CD8-positive, alpha-beta memory T cell (primary cell): ENCODE measurements at regions of chr2 and their contacts with region 1.

Region 1: GRCh38 chr2:174341286-174341994 is 6.7 kb downstream of the SP9 start:
- DNase-seq: peak; percentile 79 to 89 (median 81)
- H3K4me3 ChIP-seq: no peak overlapping the region
- H3K4me3 Mint-ChIP-seq: peak overlapping the region; percentile 72 to 85 (median 75)
- H3K27ac ChIP-seq: no peak overlapping the region
- H3K27ac Mint-ChIP-seq: peak overlapping the region in 5 of 8 donors; percentile 34 to 90 (median 52)
- H3K4me1 ChIP-seq: peaks cover 40% of the 10 kb centered on the region
- H3K4me1 Mint-ChIP-seq: peaks cover 35 to 50% (median 46%) of the 10 kb centered on the region in 3 donors
- H3K27me3 ChIP-seq: peaks cover 74% of the 10 kb centered on the region
- H3K27me3 Mint-ChIP-seq: peaks cover 68 to 69% of the 10 kb centered on the region in 2 donors

Region 2: DNA sequence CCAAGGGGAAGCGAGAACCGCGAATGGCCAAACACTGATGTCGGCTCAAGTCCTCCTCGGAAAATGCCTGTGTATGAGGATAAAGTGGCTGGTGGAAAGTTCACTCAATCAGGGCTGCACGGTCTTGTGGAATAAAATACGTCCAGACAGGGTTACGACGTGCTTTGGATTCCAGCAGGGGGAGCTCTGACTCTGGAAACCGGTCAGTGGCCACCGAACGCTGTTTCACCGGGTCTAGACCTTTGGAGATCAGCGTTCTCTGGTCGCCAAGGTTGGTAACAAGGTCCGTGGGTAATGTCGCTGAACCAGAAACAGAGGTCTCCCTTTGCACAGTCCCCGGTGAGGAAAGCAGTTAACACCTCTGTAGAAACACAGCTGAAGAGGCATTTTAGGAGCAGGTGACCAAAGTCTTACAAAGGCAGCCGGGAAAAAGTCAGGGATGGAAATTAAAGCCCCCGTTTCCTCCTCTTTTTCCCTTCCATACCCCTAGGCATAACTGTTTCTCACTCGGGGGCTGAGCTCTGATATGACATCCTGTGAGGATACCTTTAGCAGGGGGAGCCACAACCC is 939.0 kb before region 1 on chr2:
- CTCF ChIA-PET with region 1: interaction called, 47 read pairs
- POLR2A ChIA-PET with region 1: no interaction called
- DNase-seq: peak; percentile 47 to 75 (median 57)
- H3K4me3 ChIP-seq: no peak overlapping the region
- H3K4me3 Mint-ChIP-seq: no peak overlapping the region
- H3K27ac ChIP-seq: no peak overlapping the region
- H3K27ac Mint-ChIP-seq: peak overlapping the region in 1 of 8 donors; percentile 40
- H3K4me1 ChIP-seq: no peaks in the 10 kb centered on the region
- H3K4me1 Mint-ChIP-seq: peaks cover 4 to 9% (median 7%) of the 10 kb centered on the region in 3 donors
- H3K27me3 ChIP-seq: peaks cover 27% of the 10 kb centered on the region
- H3K27me3 Mint-ChIP-seq: peaks cover 38 to 77% of the 10 kb centered on the region in 2 donors

Region 3: GRCh38 chr2:173884025-173884802 is 457.2 kb before region 1 on chr2:
- CTCF ChIA-PET with region 1: interaction called, 13 read pairs
- POLR2A ChIA-PET with region 1: no interaction called
- DNase-seq: peak in 4 of 5 donors; percentile 14 to 58 (median 16)
- H3K4me3 ChIP-seq: no peak overlapping the region
- H3K4me3 Mint-ChIP-seq: no peak overlapping the region
- H3K27ac ChIP-seq: no peak overlapping the region
- H3K27ac Mint-ChIP-seq: no peak overlapping the region
- H3K4me1 ChIP-seq: no peaks in the 10 kb centered on the region
- H3K4me1 Mint-ChIP-seq: peaks cover 2 to 4% (median 3%) of the 10 kb centered on the region in 3 donors
- H3K27me3 ChIP-seq: no peaks in the 10 kb centered on the region
- H3K27me3 Mint-ChIP-seq: peaks cover 22 to 53% of the 10 kb centered on the region in 2 donors

Region 4: DNA sequence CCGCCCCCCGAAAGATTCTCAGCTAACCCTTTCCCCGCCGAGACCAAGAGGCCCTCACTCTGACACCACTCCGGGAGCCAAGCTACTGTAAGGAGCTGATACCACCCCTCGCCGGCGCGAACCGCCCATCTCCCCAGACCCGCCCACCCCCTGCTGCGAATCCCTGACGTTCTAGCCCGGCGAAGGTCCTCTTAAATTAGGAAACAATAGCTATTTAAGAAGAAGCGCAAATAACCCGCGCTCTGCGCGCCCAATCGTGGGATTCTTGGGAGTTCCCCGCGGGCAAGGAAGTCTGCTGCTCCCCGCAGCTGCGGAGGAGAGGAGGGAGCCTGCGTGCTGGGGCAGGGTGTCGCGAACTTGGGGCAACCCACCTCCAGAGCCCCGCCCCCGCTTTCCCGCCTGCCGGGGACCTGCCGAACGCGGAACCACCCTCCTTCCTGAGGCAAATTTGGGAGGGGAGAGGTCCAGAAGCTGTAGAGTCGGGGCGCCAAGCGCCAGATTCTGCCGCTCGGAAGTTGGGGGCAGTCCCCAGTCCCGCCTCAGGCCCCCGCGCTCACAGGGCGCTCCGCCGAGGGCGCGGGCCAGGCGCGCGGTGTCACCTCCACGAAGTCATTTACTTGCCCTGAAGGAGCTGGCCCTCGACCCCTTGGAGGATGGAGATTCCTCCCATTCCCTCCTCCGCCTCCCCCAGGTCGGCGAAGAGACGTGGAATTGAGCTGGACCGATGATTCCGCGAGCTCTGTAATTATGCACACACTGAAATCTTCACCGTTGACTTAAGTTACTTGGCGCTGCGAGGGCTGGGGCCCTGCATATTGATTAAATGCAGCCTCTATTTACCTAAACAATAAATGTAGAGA is 15.0 kb before region 1 on chr2:
- CTCF ChIA-PET with region 1: interaction called, 12 read pairs
- POLR2A ChIA-PET with region 1: interaction called, 4 read pairs
- DNase-seq: peak in 1 of 5 donors; percentile 51
- H3K4me3 ChIP-seq: peak overlapping the region; percentile 26
- H3K4me3 Mint-ChIP-seq: peak overlapping the region; percentile 38 to 89 (median 79)
- H3K27ac ChIP-seq: peak overlapping the region; percentile 45
- H3K27ac Mint-ChIP-seq: peak overlapping the region in 2 of 8 donors; percentile 35 to 45
- H3K4me1 ChIP-seq: peaks cover 21% of the 10 kb centered on the region
- H3K4me1 Mint-ChIP-seq: peaks cover 25 to 37% (median 25%) of the 10 kb centered on the region in 3 donors
- H3K27me3 ChIP-seq: peaks cover 69% of the 10 kb centered on the region
- H3K27me3 Mint-ChIP-seq: peaks cover 79 to 97% of the 10 kb centered on the region in 2 donors

Region 5: DNA sequence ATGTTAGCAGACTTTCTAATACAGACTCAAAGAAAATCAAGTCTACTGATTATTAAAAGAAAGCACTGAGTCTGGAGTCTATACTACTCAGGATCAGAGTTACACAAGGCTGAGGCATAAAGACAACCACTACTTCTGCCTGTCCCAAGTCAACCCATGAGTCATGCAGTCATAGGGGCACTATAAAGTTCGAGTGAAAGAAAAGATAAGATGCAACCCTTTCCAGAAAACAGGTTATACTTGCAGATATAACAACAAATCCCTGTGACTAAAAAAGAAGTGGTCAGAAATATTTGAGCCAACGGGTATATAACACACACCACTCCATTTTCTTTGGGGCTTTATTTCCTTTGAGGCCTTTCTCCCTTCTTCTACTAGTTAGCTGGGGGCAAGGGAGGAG is 35.5 kb after region 1 on chr2:
- CTCF ChIA-PET with region 1: no interaction called
- POLR2A ChIA-PET with region 1: no interaction called
- DNase-seq: no peak
- H3K4me3 ChIP-seq: no peak overlapping the region
- H3K4me3 Mint-ChIP-seq: no peak overlapping the region
- H3K27ac ChIP-seq: no peak overlapping the region
- H3K27ac Mint-ChIP-seq: peak overlapping the region in 1 of 8 donors; percentile 3
- H3K4me1 ChIP-seq: no peaks in the 10 kb centered on the region
- H3K4me1 Mint-ChIP-seq: peaks cover 0 to 3% (median 2%) of the 10 kb centered on the region in 3 donors
- H3K27me3 ChIP-seq: no peaks in the 10 kb centered on the region
- H3K27me3 Mint-ChIP-seq: no peaks in the 10 kb centered on the region

Region 6: DNA sequence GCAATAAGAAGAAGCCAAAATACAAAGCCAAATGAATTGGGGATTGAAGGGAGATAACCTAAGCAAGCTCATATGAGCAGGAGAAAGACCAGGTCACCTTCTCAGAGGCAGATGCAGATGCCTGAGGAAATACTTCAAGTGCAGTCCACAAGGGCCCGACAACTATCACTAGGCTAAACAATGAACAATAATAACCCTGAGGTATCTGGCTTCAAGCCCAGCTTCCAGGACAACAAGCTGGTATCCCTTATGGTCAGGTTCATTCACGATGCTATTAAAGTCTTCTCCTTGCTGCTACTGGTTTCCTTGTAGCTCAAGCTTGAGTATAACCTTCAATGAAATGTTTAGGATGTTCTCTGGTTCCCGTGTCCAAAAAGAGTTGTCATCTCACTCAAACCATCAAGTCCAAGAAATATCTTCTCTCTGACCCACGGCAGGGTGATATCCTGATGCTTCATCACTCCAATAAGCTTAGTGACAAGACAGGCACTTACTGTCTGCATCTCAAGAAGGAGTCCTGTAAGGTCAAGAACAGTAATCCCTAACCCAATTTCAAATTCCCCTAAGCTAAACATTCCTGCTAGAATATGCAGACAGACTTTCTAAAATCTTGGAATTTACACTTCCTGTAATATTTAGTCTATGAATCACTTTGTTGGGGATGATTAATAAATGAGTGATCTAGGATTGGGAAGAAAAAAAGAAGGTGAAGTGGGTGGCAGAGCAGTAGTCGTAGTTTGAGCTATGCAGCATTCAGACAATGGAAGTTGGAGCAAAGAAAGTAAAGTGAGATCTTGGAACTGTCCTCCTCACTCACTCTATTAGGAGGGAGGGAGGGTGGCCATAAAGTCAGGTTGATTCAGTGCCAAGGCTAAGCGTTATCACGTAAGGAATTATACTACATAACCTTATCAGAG is 630.7 kb after region 1 on chr2:
- CTCF ChIA-PET with region 1: no interaction called
- POLR2A ChIA-PET with region 1: no interaction called
- DNase-seq: no peak
- H3K4me3 ChIP-seq: no peak overlapping the region
- H3K4me3 Mint-ChIP-seq: no peak overlapping the region
- H3K27ac ChIP-seq: no peak overlapping the region
- H3K27ac Mint-ChIP-seq: no peak overlapping the region
- H3K4me1 ChIP-seq: no peaks in the 10 kb centered on the region
- H3K4me1 Mint-ChIP-seq: peaks cover 4 to 7% (median 5%) of the 10 kb centered on the region in 3 donors
- H3K27me3 ChIP-seq: no peaks in the 10 kb centered on the region
- H3K27me3 Mint-ChIP-seq: peaks cover 3 to 29% of the 10 kb centered on the region in 2 donors